T-cell (primary cell): ENCODE measurements at regions of chr13 and their contacts with region 1.

Region 1: DNA sequence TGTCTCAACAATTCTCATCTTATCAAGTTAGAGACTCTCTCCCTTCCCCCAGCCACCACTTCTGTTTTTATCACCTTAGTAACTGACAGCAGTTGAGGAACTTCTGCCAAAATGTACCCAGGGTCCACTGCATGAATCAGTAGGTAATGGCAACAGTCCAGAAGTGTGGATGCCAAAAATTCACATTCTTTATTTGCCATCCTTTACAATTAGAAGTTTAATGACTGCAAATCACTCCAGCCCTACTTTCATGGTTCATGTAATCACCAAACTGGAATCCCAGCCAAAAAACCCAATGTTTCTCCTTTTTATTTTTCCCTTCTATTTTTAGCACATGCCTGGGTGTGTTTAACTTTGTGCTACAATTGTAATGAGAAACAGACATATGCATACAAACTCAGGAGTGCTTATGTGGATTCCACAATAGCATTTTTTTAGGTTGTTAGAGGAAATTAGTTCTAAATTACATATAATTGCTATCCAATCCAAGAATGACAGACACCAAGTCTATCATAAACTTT is 243.5 kb downstream of the RGCC start:
- DNase-seq: no peak
- ATAC-seq: no peak
- H3K4me3 ChIP-seq: no peak overlapping the region
- H3K4me3 Mint-ChIP-seq: no peak overlapping the region
- H3K27ac ChIP-seq: no peak overlapping the region
- H3K27ac Mint-ChIP-seq: no peak overlapping the region
- H3K4me1 ChIP-seq: no peaks in the 10 kb centered on the region
- H3K4me1 Mint-ChIP-seq: no peaks in the 10 kb centered on the region
- H3K27me3 ChIP-seq: no peaks in the 10 kb centered on the region
- H3K27me3 Mint-ChIP-seq: no peaks in the 10 kb centered on the region

Region 2: DNA sequence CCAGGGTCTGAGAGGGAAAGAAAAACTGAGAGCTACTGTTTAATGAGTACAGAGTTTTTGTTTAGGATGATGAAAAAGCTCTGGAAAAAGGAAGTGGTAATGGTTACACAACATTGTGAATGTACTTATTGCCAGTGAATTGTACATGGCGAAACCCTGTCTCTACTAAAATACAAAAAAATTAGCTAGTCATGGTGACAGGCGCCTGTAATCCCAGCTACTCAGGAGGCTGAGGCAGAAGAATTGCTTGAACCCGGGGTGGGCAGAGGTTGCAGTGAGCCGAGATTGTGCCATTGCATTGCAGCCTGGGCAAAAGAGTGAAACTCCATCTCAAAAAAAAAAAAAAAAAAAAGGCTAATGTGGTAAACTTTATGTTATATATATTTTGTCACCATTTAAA is 163.8 kb after region 1 on chr13:
- CTCF ChIA-PET with region 1: no interaction called
- POLR2A ChIA-PET with region 1: interaction called in 1 of 2 experiments, 13 read pairs
- DNase-seq: no peak
- ATAC-seq: no peak
- H3K4me3 ChIP-seq: no peak overlapping the region
- H3K4me3 Mint-ChIP-seq: no peak overlapping the region
- H3K27ac ChIP-seq: no peak overlapping the region
- H3K27ac Mint-ChIP-seq: no peak overlapping the region
- H3K4me1 ChIP-seq: no peaks in the 10 kb centered on the region
- H3K4me1 Mint-ChIP-seq: peaks cover 0 to 4% (median 0%) of the 10 kb centered on the region in 3 donors
- H3K27me3 ChIP-seq: no peaks in the 10 kb centered on the region
- H3K27me3 Mint-ChIP-seq: no peaks in the 10 kb centered on the region

Region 3: GRCh38 chr13:42899266-42899665 is 1198.4 kb after region 1 on chr13:
- CTCF ChIA-PET with region 1: no interaction called
- POLR2A ChIA-PET with region 1: no interaction called
- DNase-seq: no peak
- ATAC-seq: no peak
- H3K4me3 ChIP-seq: no peak overlapping the region
- H3K4me3 Mint-ChIP-seq: no peak overlapping the region
- H3K27ac ChIP-seq: no peak overlapping the region
- H3K27ac Mint-ChIP-seq: no peak overlapping the region
- H3K4me1 ChIP-seq: no peaks in the 10 kb centered on the region
- H3K4me1 Mint-ChIP-seq: peaks cover 0 to 6% (median 0%) of the 10 kb centered on the region in 3 donors
- H3K27me3 ChIP-seq: no peaks in the 10 kb centered on the region
- H3K27me3 Mint-ChIP-seq: no peaks in the 10 kb centered on the region